Esophagus squamous epithelium (tissue), 5 donors: ENCODE measurements at regions of chr5 and their contacts with region 1.

Region 1: DNA sequence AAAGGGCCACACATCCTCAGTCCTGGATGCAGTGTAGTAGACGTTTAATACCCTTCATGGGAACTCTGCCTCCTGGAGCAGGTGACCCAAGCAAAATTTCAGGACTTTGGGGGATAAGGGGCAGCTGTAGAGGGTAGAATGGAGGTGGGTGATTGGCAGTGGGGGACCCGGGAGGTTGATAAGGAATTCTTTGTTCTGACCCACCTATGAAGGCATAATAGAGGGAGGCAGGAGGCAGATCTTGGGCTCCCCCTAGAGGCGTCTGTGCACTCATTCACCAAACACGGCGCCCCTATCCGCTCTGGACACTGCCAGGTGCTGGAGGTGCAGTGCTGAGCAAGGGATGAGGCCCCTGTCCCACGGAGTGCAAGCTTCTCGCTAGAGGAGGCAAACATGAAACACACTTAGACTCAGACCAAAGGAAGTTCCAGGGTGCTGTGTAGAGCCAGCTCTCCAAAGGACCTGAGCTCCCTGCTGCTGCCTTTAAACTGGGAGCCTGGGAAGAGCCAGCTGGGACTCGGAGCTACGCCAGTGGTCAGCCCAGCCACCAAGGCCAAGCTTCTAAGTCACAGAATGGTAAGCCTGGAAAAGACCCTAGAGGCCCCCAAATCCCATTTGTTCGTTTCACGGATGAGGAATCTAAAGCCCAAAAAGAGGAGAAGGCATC is 7.7 kb downstream of the IL17B start:
- DNase-seq: no peak
- H3K4me3 ChIP-seq: no peak overlapping the region
- H3K27ac ChIP-seq: peak overlapping the region in 3 of 4 donors; percentile 55 to 69 (median 61)
- H3K4me1 ChIP-seq: peaks cover 6 to 33% (median 7%) of the 10 kb centered on the region in 3 donors
- H3K27me3 ChIP-seq: no peaks in the 10 kb centered on the region
- CTCF ChIP-seq: peak; percentile 55 to 82 (median 70)
- POLR2A ChIP-seq: no peak

Region 2: GRCh38 chr5:149414405-149415060 is 43.1 kb after region 1 on chr5:
- intact Hi-C with region 1: loop called (anchors 2 kb)
- DNase-seq: no peak
- H3K4me3 ChIP-seq: peak overlapping the region in 3 of 4 donors; percentile 51 to 66 (median 52)
- H3K27ac ChIP-seq: peak overlapping the region; percentile 53 to 90 (median 88)
- H3K4me1 ChIP-seq: peaks cover 0 to 59% (median 6%) of the 10 kb centered on the region in 3 donors
- H3K27me3 ChIP-seq: no peaks in the 10 kb centered on the region
- CTCF ChIP-seq: no peak
- POLR2A ChIP-seq: no peak

Region 3: GRCh38 chr5:149448831-149449714 is 77.6 kb after region 1 on chr5:
- intact Hi-C with region 1: no loop called
- DNase-seq: no peak
- H3K4me3 ChIP-seq: no peak overlapping the region
- H3K27ac ChIP-seq: peak overlapping the region; percentile 61 to 85 (median 82)
- H3K4me1 ChIP-seq: peaks cover 22 to 87% (median 81%) of the 10 kb centered on the region in 3 donors
- H3K27me3 ChIP-seq: no peaks in the 10 kb centered on the region
- CTCF ChIP-seq: peak in 4 of 6 experiments; percentile 16 to 45 (median 30)
- POLR2A ChIP-seq: no peak

Region 4: DNA sequence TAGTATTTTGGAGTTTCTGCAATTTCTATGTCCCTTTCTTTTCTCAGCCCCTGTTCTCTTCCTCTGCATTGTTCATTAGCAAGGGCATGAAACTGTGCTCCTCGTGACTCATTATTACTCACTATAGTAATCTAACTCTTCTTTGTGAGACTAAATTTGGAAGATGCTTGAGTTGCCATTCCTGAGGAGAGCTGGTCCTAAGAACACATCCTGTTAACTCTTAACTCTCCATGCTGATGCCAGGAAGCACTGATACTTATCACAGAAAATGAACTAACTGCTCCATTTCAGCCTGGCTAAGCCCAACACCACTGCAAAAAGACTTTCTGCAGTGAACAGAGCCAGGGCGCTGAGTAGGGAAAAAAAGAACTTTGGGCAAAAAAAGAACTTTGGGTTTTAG is 190.4 kb after region 1 on chr5:
- intact Hi-C with region 1: loop called (anchors 10 kb)
- DNase-seq: no peak
- H3K4me3 ChIP-seq: peak overlapping the region in 1 of 4 donors; percentile 14
- H3K27ac ChIP-seq: peak overlapping the region; percentile 83 to 91 (median 86)
- H3K4me1 ChIP-seq: peaks cover 14 to 60% (median 43%) of the 10 kb centered on the region in 3 donors
- H3K27me3 ChIP-seq: no peaks in the 10 kb centered on the region
- CTCF ChIP-seq: no peak
- POLR2A ChIP-seq: no peak